ENCODE measurements at regions of chr1 and their contacts with region 1.

Region 1: DNA sequence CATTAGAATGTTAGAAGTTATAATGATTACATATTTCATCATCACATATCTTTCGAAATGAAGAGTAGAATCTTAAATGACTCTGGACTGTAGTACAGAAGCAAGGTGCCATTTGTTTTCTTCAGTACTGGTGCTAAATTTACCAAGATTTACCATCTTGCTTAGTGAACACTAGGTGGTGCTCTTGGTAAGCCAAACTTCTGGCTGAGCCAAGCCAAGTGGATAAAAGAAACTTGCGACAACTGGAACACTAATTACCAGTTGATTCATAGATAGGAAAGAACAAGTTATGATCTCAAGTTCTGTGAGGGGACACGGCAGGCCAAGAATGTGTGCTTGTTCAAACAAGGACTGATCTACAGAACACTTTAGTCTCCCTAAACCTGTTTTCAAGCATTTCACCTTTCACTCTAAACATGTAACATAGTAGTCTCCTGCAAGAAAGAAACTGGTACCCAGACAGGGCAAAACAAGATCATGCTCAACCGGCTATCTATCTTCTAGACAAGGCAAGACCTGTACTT is 19.8 kb downstream of the SPRTN start:
- DNase-seq: no peak
- ATAC-seq: peak; percentile 88 to 96 (median 94)
- H3K4me3 ChIP-seq: no peak overlapping the region
- H3K27ac ChIP-seq: peak overlapping the region in 1 of 3 donors; percentile 19
- H3K4me1 ChIP-seq: peaks cover 0 to 6% (median 0%) of the 10 kb centered on the region in 4 donors
- H3K27me3 ChIP-seq: no peaks in the 10 kb centered on the region
- CTCF ChIP-seq: peak; percentile 76 to 94 (median 78)
- POLR2A ChIP-seq: no peak

Region 2: DNA sequence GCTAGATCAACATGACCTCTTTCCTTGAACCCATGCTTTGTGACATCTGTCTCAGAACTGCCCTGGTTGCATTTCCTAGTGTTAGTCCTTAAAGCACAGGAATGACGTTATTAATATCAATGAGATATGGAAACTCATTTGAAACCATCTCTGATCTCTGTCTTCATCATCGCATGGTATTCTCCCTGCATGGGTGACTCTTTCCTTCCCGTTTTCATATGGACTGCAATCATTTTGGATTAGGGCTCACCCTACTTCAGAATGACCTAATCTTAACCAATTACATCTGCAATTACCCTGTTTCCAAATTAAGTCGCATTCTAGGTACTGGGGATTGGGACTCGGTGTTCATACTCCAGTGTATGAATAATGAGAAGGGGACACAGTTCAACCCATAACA is 227.0 kb after region 1 on chr1:
- intact Hi-C with region 1: loop called (anchors 5 to 10 kb)
- DNase-seq: no peak
- ATAC-seq: no peak
- H3K4me3 ChIP-seq: no peak overlapping the region
- H3K27ac ChIP-seq: no peak overlapping the region
- H3K4me1 ChIP-seq: no peaks in the 10 kb centered on the region
- H3K27me3 ChIP-seq: no peaks in the 10 kb centered on the region
- CTCF ChIP-seq: no peak
- POLR2A ChIP-seq: no peak

Region 3: DNA sequence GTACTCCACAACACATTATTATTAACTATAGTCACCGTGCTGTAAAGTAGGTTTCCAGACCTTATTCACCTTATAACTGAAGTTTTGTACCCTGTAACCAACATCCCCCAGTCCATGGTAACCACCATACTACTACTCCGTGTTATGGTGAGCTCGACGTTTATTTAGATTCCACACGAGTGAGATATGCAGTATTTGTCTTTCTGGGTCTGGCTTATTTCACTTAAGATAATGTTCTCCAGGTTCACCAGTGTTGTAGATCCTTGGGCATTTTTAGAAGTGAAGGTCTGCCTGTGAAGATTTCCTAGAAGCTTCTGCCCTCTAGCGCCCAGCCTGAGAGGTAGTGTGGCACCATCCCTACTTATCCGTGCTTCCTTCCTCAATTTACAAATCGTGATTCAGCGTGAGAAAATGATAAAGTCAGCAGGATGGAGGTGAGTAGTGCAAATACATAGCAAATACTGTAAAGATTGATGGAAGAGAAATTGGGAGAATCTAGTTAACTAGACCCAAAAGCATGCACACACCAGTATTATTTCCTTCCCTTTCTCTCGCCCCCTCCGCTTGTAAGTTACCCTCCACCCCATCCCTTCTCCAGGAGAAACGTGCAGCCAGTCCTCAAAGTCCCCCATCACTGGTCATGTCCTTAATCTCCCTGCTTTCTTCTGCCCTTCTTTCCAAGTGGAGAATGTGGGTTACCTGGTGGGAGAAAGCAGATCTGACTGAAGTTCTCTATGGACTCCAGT is 232.7 kb after region 1 on chr1:
- intact Hi-C with region 1: loop called (anchors 5 to 10 kb)
- DNase-seq: peak; percentile 46 to 59 (median 52)
- ATAC-seq: peak; percentile 88 to 99 (median 92)
- H3K4me3 ChIP-seq: no peak overlapping the region
- H3K27ac ChIP-seq: no peak overlapping the region
- H3K4me1 ChIP-seq: no peaks in the 10 kb centered on the region
- H3K27me3 ChIP-seq: no peaks in the 10 kb centered on the region
- CTCF ChIP-seq: peak; percentile 74 to 80 (median 76)
- POLR2A ChIP-seq: no peak